ENCODE measurements at regions of chr21 and their contacts with region 1.

Region 1: DNA sequence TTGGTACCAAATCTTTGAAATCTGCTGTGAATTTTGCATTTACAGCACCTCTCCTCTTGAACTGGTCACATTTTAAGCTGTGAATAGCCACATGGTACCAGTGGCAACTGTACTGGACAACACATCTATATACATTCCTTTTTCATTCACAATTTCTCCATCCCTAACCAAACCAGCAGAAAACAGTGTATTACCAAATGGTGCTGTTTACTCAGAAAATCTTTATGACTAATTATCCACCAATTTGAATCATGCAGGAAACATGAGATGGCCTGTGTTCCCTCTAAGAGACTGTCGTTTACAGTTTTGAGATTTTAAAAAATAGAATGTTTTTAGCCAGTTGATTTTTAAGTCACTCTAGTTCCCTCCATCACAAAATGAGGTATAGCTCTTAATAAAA is 17.6 kb upstream of the CCT8 start:
- DNase-seq: no peak
- H3K4me3 Mint-ChIP-seq: no peak overlapping the region
- H3K27ac Mint-ChIP-seq: no peak overlapping the region
- H3K4me1 Mint-ChIP-seq: peaks cover 5% of the 10 kb centered on the region
- H3K27me3 Mint-ChIP-seq: no peaks in the 10 kb centered on the region

Region 2: GRCh38 chr21:29164325-29164942 is 73.4 kb after region 1 on chr21:
- CTCF ChIA-PET with region 1: interaction called, 3 read pairs
- intact Hi-C with region 1: loop called (anchors 5 kb)
- DNase-seq: no peak
- H3K4me3 Mint-ChIP-seq: no peak overlapping the region
- H3K27ac Mint-ChIP-seq: no peak overlapping the region
- H3K4me1 Mint-ChIP-seq: no peaks in the 10 kb centered on the region
- H3K27me3 Mint-ChIP-seq: no peaks in the 10 kb centered on the region

Region 3: GRCh38 chr21:29343519-29343918 is 252.5 kb after region 1 on chr21:
- CTCF ChIA-PET with region 1: interaction called, 12 read pairs
- intact Hi-C with region 1: loop called (anchors 1 kb)
- DNase-seq: no peak
- H3K4me3 Mint-ChIP-seq: no peak overlapping the region
- H3K27ac Mint-ChIP-seq: no peak overlapping the region
- H3K4me1 Mint-ChIP-seq: peaks cover 39% of the 10 kb centered on the region
- H3K27me3 Mint-ChIP-seq: no peaks in the 10 kb centered on the region

Region 4: GRCh38 chr21:29351691-29352090 is 260.7 kb after region 1 on chr21:
- CTCF ChIA-PET with region 1: interaction called, 12 read pairs
- intact Hi-C with region 1: loop called (anchors 1 kb)
- DNase-seq: no peak
- H3K4me3 Mint-ChIP-seq: no peak overlapping the region
- H3K27ac Mint-ChIP-seq: no peak overlapping the region
- H3K4me1 Mint-ChIP-seq: peaks cover 19% of the 10 kb centered on the region
- H3K27me3 Mint-ChIP-seq: no peaks in the 10 kb centered on the region

Region 5: GRCh38 chr21:29403922-29404538 is 313.0 kb after region 1 on chr21:
- CTCF ChIA-PET with region 1: no interaction called
- intact Hi-C with region 1: no loop called
- DNase-seq: no peak
- H3K4me3 Mint-ChIP-seq: no peak overlapping the region
- H3K27ac Mint-ChIP-seq: peak overlapping the region; percentile 2
- H3K4me1 Mint-ChIP-seq: no peaks in the 10 kb centered on the region
- H3K27me3 Mint-ChIP-seq: no peaks in the 10 kb centered on the region

Region 6: GRCh38 chr21:29849735-29850176 is 758.7 kb after region 1 on chr21:
- CTCF ChIA-PET with region 1: interaction called, 3 read pairs
- intact Hi-C with region 1: loop called (anchors 1 kb)
- DNase-seq: peak; percentile 66
- H3K4me3 Mint-ChIP-seq: no peak overlapping the region
- H3K27ac Mint-ChIP-seq: no peak overlapping the region
- H3K4me1 Mint-ChIP-seq: no peaks in the 10 kb centered on the region
- H3K27me3 Mint-ChIP-seq: peaks cover 6% of the 10 kb centered on the region